ENCODE measurements at regions of chr12 and their contacts with region 1.

Region 1: GRCh38 chr12:121888478-121889266 is at the start of gene PSMD9:
- DNase-seq: peak; percentile 96 to 99 (median 98)
- ATAC-seq: peak; percentile 98
- H3K4me3 ChIP-seq: peak within 1 kb of the TSS; percentile 74
- H3K4me3 Mint-ChIP-seq: peak within 1 kb of the TSS; percentile 85 to 100 (median 98)
- H3K27ac ChIP-seq: peak within 1 kb of the TSS; percentile 98
- H3K27ac Mint-ChIP-seq: peak within 1 kb of the TSS; percentile 92 to 100 (median 99)
- H3K4me1 ChIP-seq: peaks cover 19 to 21% of the 10 kb centered on the region in 2 donors
- H3K4me1 Mint-ChIP-seq: peaks cover 18 to 50% (median 40%) of the 10 kb centered on the region in 7 donors
- H3K27me3 ChIP-seq: no peaks in the 10 kb centered on the region
- H3K27me3 Mint-ChIP-seq: peaks cover 0 to 4% (median 0%) of the 10 kb centered on the region in 5 donors
- total RNA-seq, gene PSMD9: 36.7 to 55.2 (median 46.9) TPM

Region 2: GRCh38 chr12:121351820-121352681 is 536.6 kb before region 1 on chr12 and contains the start of gene ANAPC5:
- CTCF ChIA-PET with region 1: no interaction called
- POLR2A ChIA-PET with region 1: interaction called, 3 read pairs
- intact Hi-C with region 1: loop called in 1 of 2 experiments (anchors 1 kb)
- DNase-seq: peak; percentile 61 to 93 (median 89)
- ATAC-seq: peak; percentile 99
- H3K4me3 ChIP-seq: peak within 1 kb of the TSS; percentile 99
- H3K4me3 Mint-ChIP-seq: peak within 1 kb of the TSS; percentile 88 to 100 (median 97)
- H3K27ac ChIP-seq: peak within 1 kb of the TSS; percentile 78
- H3K27ac Mint-ChIP-seq: peak within 1 kb of the TSS; percentile 90 to 100 (median 98)
- H3K4me1 ChIP-seq: peaks cover 6 to 7% of the 10 kb centered on the region in 2 donors
- H3K4me1 Mint-ChIP-seq: peaks cover 25 to 58% (median 42%) of the 10 kb centered on the region in 7 donors
- H3K27me3 ChIP-seq: no peaks in the 10 kb centered on the region
- H3K27me3 Mint-ChIP-seq: peaks cover 0 to 5% (median 0%) of the 10 kb centered on the region in 5 donors
- total RNA-seq, gene ANAPC5: 114 to 148 (median 141) TPM

Region 3: GRCh38 chr12:121688966-121689365 is 199.7 kb before region 1 on chr12:
- CTCF ChIA-PET with region 1: no interaction called
- POLR2A ChIA-PET with region 1: no interaction called
- intact Hi-C with region 1: loop called (anchors 1 to 5 kb)
- DNase-seq: no peak
- ATAC-seq: no peak
- H3K4me3 ChIP-seq: no peak overlapping the region
- H3K4me3 Mint-ChIP-seq: no peak overlapping the region
- H3K27ac ChIP-seq: no peak overlapping the region
- H3K27ac Mint-ChIP-seq: peak overlapping the region in 6 of 9 donors; percentile 8 to 36 (median 22)
- H3K4me1 ChIP-seq: peaks cover 0 to 4% of the 10 kb centered on the region in 2 donors
- H3K4me1 Mint-ChIP-seq: peaks cover 0 to 16% (median 10%) of the 10 kb centered on the region in 7 donors
- H3K27me3 ChIP-seq: no peaks in the 10 kb centered on the region
- H3K27me3 Mint-ChIP-seq: peaks cover 0 to 6% (median 0%) of the 10 kb centered on the region in 5 donors

Region 4: GRCh38 chr12:121712461-121713256 is 176.0 kb before region 1 on chr12 and contains the start of gene TMEM120B:
- CTCF ChIA-PET with region 1: interaction called, 3 read pairs
- POLR2A ChIA-PET with region 1: interaction called, 4 read pairs
- intact Hi-C with region 1: loop called (anchors 1 to 5 kb)
- DNase-seq: peak; percentile 75 to 91 (median 86)
- ATAC-seq: peak; percentile 97
- H3K4me3 ChIP-seq: peak within 1 kb of the TSS; percentile 99
- H3K4me3 Mint-ChIP-seq: peak within 1 kb of the TSS; percentile 84 to 97 (median 94)
- H3K27ac ChIP-seq: peak within 1 kb of the TSS; percentile 82
- H3K27ac Mint-ChIP-seq: peak within 1 kb of the TSS; percentile 86 to 96 (median 92)
- H3K4me1 ChIP-seq: peaks cover 11 to 12% of the 10 kb centered on the region in 2 donors
- H3K4me1 Mint-ChIP-seq: peaks cover 7 to 37% (median 26%) of the 10 kb centered on the region in 7 donors
- H3K27me3 ChIP-seq: no peaks in the 10 kb centered on the region
- H3K27me3 Mint-ChIP-seq: no peaks in the 10 kb centered on the region
- total RNA-seq, gene TMEM120B: 7.3 to 14.3 (median 9.2) TPM

Region 5: DNA sequence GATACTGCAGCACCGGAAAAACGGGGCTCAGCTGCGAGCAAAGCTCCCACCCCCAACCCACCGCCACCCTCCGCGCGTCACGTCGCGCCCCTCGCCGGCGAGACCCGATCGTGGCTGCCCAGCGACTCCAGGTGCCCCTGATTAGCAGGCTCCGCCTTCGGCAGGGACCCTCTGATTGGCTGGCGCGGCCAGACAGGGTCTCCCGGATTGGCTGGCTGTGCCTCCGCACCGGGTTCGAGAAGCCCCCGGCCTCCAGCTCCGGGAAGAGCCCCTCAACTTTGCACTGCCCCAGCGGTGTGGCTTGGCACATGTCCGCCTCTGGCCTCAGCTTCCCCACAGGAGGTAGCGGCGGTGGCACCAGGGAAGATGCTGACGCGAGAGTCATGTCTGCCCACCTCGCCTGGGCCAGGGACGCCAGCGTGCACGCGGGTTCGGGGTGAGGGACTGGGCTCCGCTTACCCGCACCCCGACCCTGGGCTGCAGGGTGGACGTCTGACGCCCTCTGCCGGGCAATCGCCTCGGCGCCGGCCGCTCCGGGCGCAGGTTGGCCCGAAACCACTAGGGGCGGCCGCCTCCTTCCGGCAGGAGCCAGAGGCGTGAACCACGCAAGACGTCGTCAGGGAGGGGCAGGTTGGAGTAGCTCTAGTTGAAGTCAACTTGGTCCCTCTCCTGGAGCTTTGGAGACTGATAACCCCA is 94.7 kb before region 1 on chr12:
- CTCF ChIA-PET with region 1: interaction called, 29 read pairs
- POLR2A ChIA-PET with region 1: interaction called, 33 read pairs
- intact Hi-C with region 1: loop called (anchors 1 kb)
- DNase-seq: peak; percentile 91 to 98 (median 95)
- ATAC-seq: peak; percentile 77
- H3K4me3 ChIP-seq: peak overlapping the region; percentile 99
- H3K4me3 Mint-ChIP-seq: peak overlapping the region; percentile 84 to 99 (median 93)
- H3K27ac ChIP-seq: peak overlapping the region; percentile 96
- H3K27ac Mint-ChIP-seq: peak overlapping the region; percentile 85 to 99 (median 95)
- H3K4me1 ChIP-seq: peaks cover 44 to 50% of the 10 kb centered on the region in 2 donors
- H3K4me1 Mint-ChIP-seq: peaks cover 44 to 72% (median 59%) of the 10 kb centered on the region in 7 donors
- H3K27me3 ChIP-seq: no peaks in the 10 kb centered on the region
- H3K27me3 Mint-ChIP-seq: no peaks in the 10 kb centered on the region

Region 6: DNA sequence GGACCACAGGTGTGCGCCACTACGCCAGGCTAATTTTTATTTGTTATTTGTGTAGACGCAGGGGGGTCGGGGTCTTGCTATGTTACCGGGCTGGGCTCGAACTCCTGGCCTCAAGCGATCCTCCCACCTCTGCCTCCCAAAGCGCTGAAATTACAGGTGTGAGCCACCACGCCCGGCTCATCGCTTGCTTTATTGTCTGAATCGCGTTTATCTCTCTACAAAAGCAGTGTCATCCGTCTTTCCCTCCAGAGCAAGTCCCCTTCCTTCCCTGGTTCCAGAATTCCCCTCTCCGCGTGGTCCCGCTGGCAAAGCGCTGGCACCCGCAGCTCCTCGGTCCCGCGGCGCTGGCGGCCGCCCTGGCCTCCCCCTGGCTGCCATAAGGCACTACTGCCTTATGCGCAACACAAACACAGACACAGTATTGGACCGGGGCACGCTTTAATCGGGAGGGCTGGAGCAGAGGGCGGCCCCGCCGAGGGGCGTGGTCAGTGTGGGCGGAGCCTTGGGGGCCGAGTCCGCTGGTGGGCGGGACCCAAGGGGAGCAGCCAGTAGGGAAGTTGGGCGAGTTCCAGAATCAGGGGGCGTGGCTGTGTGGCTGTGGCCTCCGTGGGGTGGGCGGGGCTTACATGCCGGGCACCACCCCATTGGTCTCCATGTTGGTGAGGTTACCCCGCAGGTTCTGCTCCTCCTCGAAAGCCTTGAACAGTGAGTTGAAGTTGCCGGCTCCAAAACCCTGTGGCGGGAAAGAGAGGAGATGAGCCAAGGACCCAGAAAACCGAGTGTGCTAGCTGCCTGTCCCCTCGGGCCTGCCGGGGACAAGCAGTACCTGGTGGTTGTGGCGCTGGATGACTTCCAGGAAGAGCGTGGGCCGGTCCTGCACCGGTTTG is 49.3 kb before region 1 on chr12:
- CTCF ChIA-PET with region 1: interaction called, 4 read pairs
- POLR2A ChIA-PET with region 1: interaction called, 9 read pairs
- intact Hi-C with region 1: loop called (anchors 1 kb)
- DNase-seq: peak; percentile 98 to 100 (median 99)
- ATAC-seq: peak; percentile 100
- H3K4me3 ChIP-seq: peak overlapping the region; percentile 91
- H3K4me3 Mint-ChIP-seq: peak overlapping the region; percentile 96 to 100 (median 98)
- H3K27ac ChIP-seq: peak overlapping the region; percentile 58
- H3K27ac Mint-ChIP-seq: peak overlapping the region; percentile 87 to 96 (median 92)
- H3K4me1 ChIP-seq: peaks cover 8 to 13% of the 10 kb centered on the region in 2 donors
- H3K4me1 Mint-ChIP-seq: peaks cover 12 to 27% (median 18%) of the 10 kb centered on the region in 7 donors
- H3K27me3 ChIP-seq: no peaks in the 10 kb centered on the region
- H3K27me3 Mint-ChIP-seq: no peaks in the 10 kb centered on the region

Region 7: DNA sequence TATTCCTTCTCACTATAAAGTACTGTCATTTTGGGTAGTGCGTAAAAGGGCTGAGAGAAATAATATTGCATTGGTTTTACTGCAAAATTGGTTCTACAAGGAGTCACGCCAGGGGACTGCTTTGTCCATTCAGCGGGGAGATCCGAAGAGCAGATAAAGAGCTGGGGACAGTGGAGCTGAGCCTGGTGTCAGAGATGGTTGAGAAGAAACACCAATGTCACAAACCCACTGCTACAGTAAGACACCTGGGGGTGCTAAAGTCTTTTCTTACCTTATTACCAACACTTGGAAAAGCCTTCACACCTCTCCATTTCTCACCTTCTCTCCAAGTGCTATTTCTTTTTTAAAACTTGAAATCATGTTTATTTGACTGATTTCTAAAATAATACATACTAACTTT is 271.2 kb after region 1 on chr12:
- CTCF ChIA-PET with region 1: no interaction called
- POLR2A ChIA-PET with region 1: no interaction called
- intact Hi-C with region 1: no loop called
- DNase-seq: no peak
- ATAC-seq: no peak
- H3K4me3 ChIP-seq: no peak overlapping the region
- H3K4me3 Mint-ChIP-seq: no peak overlapping the region
- H3K27ac ChIP-seq: no peak overlapping the region
- H3K27ac Mint-ChIP-seq: no peak overlapping the region
- H3K4me1 ChIP-seq: peaks cover 0 to 13% of the 10 kb centered on the region in 2 donors
- H3K4me1 Mint-ChIP-seq: peaks cover 0 to 11% (median 0%) of the 10 kb centered on the region in 7 donors
- H3K27me3 ChIP-seq: no peaks in the 10 kb centered on the region
- H3K27me3 Mint-ChIP-seq: peaks cover 0 to 3% (median 0%) of the 10 kb centered on the region in 5 donors

Region 8: DNA sequence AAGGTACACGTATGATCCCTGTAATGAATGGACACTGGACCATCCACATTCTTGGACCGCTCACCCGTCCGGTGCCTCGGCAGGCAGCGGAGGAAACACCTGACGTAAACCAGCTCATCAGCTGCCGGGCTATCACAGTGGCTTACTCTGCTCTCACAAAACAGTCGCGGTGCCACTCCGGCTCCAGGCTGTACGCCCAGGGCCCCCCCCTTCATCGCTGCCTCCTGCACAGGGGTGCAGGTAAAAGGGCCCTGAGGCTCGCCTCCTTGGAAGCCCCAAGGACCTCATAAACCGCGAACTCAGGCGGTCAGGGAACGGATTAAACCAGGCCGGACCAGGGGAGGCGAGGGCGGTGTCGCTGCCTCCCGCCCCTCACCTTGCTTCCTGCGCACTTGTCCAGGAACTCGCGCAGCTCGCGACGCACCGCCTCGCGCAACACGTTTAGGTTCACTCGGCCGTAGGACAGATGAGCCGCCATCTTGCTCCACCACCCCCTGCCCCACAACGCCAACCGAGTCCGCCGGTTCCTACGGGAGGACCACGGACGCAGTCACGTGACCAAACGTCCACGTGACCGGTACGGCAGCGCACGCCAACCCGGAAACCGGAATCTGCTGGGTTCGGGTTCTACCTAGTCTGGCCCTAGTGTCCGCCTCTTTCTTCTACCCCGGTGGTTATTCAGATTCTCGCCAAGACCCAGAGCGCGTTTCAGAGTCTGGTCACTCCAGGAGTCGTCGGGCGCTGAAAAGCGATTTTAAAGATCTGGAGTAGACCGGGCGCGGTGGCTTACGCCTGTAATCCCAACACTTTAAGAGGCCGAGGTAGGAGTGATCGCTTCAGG is 377.5 kb after region 1 on chr12 and contains the start of gene VPS33A:
- CTCF ChIA-PET with region 1: no interaction called
- POLR2A ChIA-PET with region 1: no interaction called
- intact Hi-C with region 1: loop called in 1 of 2 experiments (anchors 1 kb)
- DNase-seq: peak; percentile 82 to 96 (median 90)
- ATAC-seq: peak; percentile 89
- H3K4me3 ChIP-seq: peak within 1 kb of the TSS; percentile 74
- H3K4me3 Mint-ChIP-seq: peak within 1 kb of the TSS; percentile 93 to 99 (median 96)
- H3K27ac ChIP-seq: peak within 1 kb of the TSS; percentile 95
- H3K27ac Mint-ChIP-seq: peak within 1 kb of the TSS; percentile 98 to 100 (median 99)
- H3K4me1 ChIP-seq: peaks cover 12 to 17% of the 10 kb centered on the region in 2 donors
- H3K4me1 Mint-ChIP-seq: peaks cover 0 to 37% (median 32%) of the 10 kb centered on the region in 7 donors
- H3K27me3 ChIP-seq: no peaks in the 10 kb centered on the region
- H3K27me3 Mint-ChIP-seq: peaks cover 0 to 6% (median 0%) of the 10 kb centered on the region in 5 donors
- total RNA-seq, gene VPS33A: 19.9 to 34.5 (median 31.4) TPM

Measured in naive thymus-derived CD4-positive, alpha-beta T cell (primary cell).